Heart left ventricle (tissue), 16 donors: ENCODE measurements at regions of chr21 and their contacts with region 1.

Region 1: DNA sequence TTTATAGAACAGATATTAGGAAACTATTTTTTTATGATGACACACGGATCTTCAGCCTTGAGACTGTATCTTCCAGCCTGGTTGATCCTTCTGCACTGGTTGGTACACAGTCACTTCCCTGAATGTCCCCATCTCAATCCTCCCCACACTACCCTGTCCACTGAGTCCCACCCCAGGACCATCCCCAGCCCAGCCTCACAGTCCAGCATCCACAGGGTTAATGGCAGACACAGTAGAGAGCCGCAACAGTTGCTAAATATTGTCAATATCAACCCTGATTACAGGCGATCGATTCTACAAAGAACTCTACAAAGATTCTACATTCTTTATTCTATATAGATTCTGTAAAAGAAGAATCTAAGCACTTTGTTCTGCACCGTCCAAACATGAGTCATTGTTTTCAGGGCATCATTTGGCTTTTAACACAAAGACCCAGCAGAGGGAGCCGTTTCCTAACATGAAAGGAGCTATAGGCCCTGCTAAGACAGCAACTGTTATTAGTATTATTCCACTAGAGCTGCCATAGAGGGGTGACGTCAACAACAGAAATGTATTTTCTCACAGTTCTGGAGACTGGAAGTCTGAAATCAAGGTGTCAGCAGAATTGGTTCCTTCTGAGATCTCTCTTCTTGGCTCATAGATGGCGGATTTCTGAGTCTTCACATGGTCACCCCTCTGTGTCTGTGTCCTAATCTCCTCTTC is 30.1 kb upstream of the IFNAR2 start:
- DNase-seq: peak in 4 of 5 donors; percentile 78 to 86 (median 82)
- ATAC-seq: peak; percentile 67 to 76 (median 74)
- H3K4me3 ChIP-seq: no peak overlapping the region
- H3K27ac ChIP-seq: peak overlapping the region in 11 of 12 donors; percentile 41 to 93 (median 76)
- H3K4me1 ChIP-seq: peaks cover 0 to 55% (median 33%) of the 10 kb centered on the region in 12 donors
- H3K27me3 ChIP-seq: no peaks in the 10 kb centered on the region
- CTCF ChIP-seq: peak; percentile 68 to 92 (median 80)
- POLR2A ChIP-seq: no peak

Region 2: GRCh38 chr21:32834916-32835235 is 364.8 kb before region 1 on chr21:
- intact Hi-C with region 1: loop called (anchors 2 to 10 kb)
- DNase-seq: no peak
- ATAC-seq: no peak
- H3K4me3 ChIP-seq: no peak overlapping the region
- H3K27ac ChIP-seq: no peak overlapping the region
- H3K4me1 ChIP-seq: peaks cover 0 to 4% (median 0%) of the 10 kb centered on the region in 12 donors
- H3K27me3 ChIP-seq: peaks cover 0 to 10% (median 0%) of the 10 kb centered on the region in 9 donors
- CTCF ChIP-seq: no peak
- POLR2A ChIP-seq: no peak

Region 3: GRCh38 chr21:32994305-32994704 is 205.4 kb before region 1 on chr21:
- intact Hi-C with region 1: loop called in 7 of 10 experiments (anchors 2 to 10 kb)
- DNase-seq: no peak
- ATAC-seq: no peak
- H3K4me3 ChIP-seq: no peak overlapping the region
- H3K27ac ChIP-seq: no peak overlapping the region
- H3K4me1 ChIP-seq: no peaks in the 10 kb centered on the region
- H3K27me3 ChIP-seq: peaks cover 0 to 33% (median 2%) of the 10 kb centered on the region in 9 donors
- CTCF ChIP-seq: peak in 9 of 12 donors; percentile 24 to 46 (median 38)
- POLR2A ChIP-seq: no peak

Region 4: GRCh38 chr21:33011462-33011861 is 188.2 kb before region 1 on chr21:
- intact Hi-C with region 1: no loop called
- DNase-seq: no peak
- ATAC-seq: peak in 1 of 4 donors; percentile 33
- H3K4me3 ChIP-seq: no peak overlapping the region
- H3K27ac ChIP-seq: no peak overlapping the region
- H3K4me1 ChIP-seq: peaks cover 0 to 25% (median 0%) of the 10 kb centered on the region in 12 donors
- H3K27me3 ChIP-seq: peaks cover 0 to 55% (median 13%) of the 10 kb centered on the region in 9 donors
- CTCF ChIP-seq: no peak
- POLR2A ChIP-seq: no peak

Region 5: DNA sequence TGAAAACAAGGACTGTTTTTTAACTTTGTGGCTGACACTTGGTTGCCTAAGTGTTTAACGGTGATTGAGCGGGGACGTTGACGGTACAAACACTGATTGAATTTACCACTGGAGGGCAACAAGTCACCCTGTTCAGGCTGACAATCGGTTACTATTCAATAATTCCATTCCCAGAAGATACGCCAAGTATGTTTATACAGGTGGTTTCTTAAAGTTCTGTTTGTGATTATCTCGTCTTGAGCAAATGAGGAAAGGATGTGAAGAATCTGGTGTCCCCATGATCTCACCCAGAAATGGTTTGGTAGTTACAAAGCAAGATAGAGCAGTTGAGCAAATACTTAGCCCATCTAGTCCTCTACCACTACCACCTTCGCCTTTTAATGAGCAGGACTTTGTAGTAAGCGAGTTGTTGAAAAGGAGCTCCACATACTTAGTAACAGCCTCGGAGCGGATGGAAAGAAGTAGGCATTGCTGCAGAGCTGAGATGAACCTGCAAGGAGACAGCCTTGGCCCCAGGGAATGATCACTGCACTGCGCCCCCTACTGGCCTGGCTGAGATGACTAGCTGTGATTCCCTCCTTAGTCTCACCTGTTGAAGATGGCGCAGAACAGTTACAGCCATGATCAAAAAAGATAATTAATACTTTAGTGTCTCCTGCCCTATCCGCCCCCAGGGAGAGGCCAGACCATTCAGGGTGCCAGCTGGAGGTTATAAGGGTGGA is 161.4 kb after region 1 on chr21:
- intact Hi-C with region 1: loop called in 1 of 10 experiments (anchors 5 kb)
- DNase-seq: peak; percentile 74 to 86 (median 77)
- ATAC-seq: peak; percentile 74 to 86 (median 80)
- H3K4me3 ChIP-seq: peak overlapping the region in 11 of 12 donors; percentile 16 to 55 (median 36)
- H3K27ac ChIP-seq: peak overlapping the region in 11 of 12 donors; percentile 34 to 90 (median 58)
- H3K4me1 ChIP-seq: peaks cover 0 to 39% (median 20%) of the 10 kb centered on the region in 12 donors
- H3K27me3 ChIP-seq: no peaks in the 10 kb centered on the region
- CTCF ChIP-seq: peak; percentile 71 to 88 (median 82)
- POLR2A ChIP-seq: no peak

Region 6: DNA sequence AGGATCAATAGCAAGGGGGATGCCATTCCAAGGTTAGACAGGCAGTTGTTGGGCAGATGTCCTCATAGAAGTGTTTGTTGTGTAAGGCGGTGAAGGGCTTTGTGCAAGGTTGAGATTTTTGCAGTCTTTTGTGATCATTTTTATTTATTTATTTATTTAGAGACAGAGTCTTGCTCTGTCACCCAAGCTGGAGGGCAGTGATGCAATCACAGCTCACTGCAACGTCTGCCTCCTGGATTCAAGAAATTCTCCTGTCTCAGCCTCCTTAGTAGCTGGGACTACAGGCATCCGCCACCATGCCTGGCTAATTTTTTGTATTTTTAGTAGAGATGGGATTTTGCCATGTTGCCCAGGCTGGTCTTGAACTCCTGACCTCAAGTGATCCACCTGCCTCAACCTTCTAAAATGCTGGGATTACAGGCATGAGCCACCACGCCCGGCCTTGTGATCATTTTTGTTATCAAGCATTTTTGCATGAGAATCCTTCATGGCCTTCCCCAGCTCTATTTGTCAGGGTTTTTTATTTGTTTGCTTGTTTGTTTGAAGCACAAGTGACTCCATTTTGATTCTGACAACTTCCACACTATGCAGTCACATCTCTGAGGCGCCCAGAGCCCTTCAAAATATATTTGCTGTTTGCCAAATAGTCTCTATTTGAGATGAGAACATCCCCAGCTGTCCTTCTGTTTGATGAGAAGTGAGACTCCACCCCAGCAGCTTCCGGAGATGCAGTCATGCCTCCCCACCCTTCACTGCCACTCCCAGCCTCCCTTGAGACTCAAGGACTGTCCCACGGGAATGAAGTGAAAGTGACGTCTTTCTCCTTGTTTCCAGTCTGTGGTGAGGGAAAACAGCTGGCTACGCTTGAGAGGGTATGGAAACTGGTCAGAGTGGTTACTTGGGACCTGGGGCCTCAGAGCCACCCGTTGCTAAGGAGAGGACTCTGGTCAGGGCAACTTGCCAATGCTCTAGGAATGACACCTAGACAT is 242.1 kb after region 1 on chr21:
- intact Hi-C with region 1: loop called (anchors 1 to 5 kb)
- DNase-seq: peak in 4 of 5 donors; percentile 70 to 80 (median 78)
- ATAC-seq: peak; percentile 59 to 80 (median 75)
- H3K4me3 ChIP-seq: no peak overlapping the region
- H3K27ac ChIP-seq: peak overlapping the region in 11 of 12 donors; percentile 21 to 71 (median 51)
- H3K4me1 ChIP-seq: peaks cover 0 to 26% (median 13%) of the 10 kb centered on the region in 12 donors
- H3K27me3 ChIP-seq: no peaks in the 10 kb centered on the region
- CTCF ChIP-seq: no peak
- POLR2A ChIP-seq: no peak

Region 7: GRCh38 chr21:33608559-33608958 is 408.9 kb after region 1 on chr21:
- intact Hi-C with region 1: loop called in 1 of 10 experiments (anchors 10 kb)
- DNase-seq: no peak
- ATAC-seq: no peak
- H3K4me3 ChIP-seq: no peak overlapping the region
- H3K27ac ChIP-seq: no peak overlapping the region
- H3K4me1 ChIP-seq: no peaks in the 10 kb centered on the region
- H3K27me3 ChIP-seq: no peaks in the 10 kb centered on the region
- CTCF ChIP-seq: no peak
- POLR2A ChIP-seq: no peak